ENCODE measurements at regions of chr3 and their contacts with region 1.

Region 1: DNA sequence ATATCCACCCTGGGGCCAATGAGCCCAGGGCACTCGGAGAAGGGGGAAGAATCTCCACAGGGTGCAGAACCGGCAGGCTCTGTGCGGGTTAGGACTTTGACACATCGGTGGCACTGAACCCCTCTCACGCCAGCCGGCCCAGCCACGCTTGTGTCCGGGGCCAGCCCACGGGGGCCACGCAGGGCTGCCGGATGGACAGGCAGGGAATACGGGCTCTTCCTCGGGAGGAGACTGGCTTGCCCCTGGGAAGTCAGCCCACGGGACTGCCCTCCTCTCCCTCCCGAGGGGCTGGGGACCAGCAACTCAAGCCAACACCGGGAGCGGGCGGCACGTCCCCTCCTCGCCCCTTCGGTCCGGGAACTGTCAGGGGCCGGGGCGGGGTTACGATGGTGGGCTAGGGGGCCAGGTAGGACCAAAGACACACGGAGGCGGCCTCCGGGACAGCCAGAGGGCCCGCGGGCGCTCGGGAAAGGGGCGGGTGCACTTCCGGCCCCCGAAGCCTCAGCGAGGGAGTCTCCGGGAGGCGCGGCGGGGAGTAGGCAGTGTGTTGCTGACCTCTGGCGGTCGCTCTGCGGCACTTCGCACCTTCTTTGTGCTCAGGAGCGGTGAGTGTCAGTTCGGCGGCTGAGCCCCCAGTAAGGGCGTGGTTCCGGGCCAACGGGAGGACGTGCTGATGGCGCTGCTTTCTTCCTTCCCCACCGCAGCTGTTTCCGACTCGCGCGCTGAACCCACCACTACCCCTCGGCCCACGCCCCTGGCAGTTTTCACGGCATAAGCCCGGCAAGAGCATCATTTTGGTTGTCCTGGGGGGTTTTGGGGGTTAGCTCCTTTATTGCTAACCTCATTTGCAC is 5.1 kb upstream of the CYP8B1 start:
- DNase-seq: peak; percentile 42
- ATAC-seq: peak; percentile 100
- H3K4me3 ChIP-seq: peak overlapping the region; percentile 64
- H3K27ac ChIP-seq: no peak overlapping the region
- H3K4me1 ChIP-seq: peaks cover 4% of the 10 kb centered on the region; the same call in 1 of the 2 replicates
- H3K27me3 ChIP-seq: no peaks in the 10 kb centered on the region
- CTCF ChIP-seq: peak; percentile 79 to 98 (median 95)
- EP300 ChIP-seq: no peak
- POLR2A ChIP-seq: peak; percentile 60
- RAD21 ChIP-seq: peak; percentile 80

Region 2: GRCh38 chr3:42831321-42831713 is 49.5 kb before region 1 on chr3:
- CTCF ChIA-PET with region 1: interaction called, 35 read pairs
- POLR2A ChIA-PET with region 1: no interaction called
- RAD21 ChIA-PET with region 1: interaction called, 9 read pairs
- SMC1A ChIA-PET with region 1: interaction called, 7 read pairs
- in situ Hi-C with region 1: loop called (anchors 5 kb)
- intact Hi-C with region 1: loop called (anchors 1 kb)
- DNase-seq: no peak
- ATAC-seq: peak; percentile 98
- H3K4me3 ChIP-seq: no peak overlapping the region
- H3K27ac ChIP-seq: no peak overlapping the region
- H3K4me1 ChIP-seq: no peaks in the 10 kb centered on the region
- H3K27me3 ChIP-seq: no peaks in the 10 kb centered on the region
- CTCF ChIP-seq: peak; percentile 71 to 80 (median 79)
- EP300 ChIP-seq: no peak
- POLR2A ChIP-seq: no peak
- RAD21 ChIP-seq: peak; percentile 68

Region 3: DNA sequence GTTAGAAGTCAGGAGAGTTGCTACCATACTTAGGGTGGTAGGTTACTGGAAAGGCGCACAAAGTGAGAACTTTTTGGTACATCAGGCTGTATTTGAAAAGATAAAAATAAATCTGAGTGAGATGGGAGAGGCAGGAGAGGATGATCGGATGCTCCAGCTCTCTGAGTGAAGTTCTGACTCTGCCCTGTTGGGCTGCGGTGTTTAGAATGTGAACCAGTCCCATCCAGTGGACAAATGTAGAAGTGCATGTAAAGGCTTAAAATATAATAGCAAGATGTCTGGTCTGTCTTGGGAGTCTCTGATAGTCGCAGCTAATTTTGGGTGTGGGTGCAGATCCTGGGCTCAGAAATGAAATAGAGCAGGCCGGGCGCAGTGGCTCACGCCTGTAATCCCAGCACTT is 41.2 kb before region 1 on chr3:
- CTCF ChIA-PET with region 1: interaction called, 24 read pairs
- POLR2A ChIA-PET with region 1: interaction called, 3 read pairs
- RAD21 ChIA-PET with region 1: interaction called, 6 read pairs
- SMC1A ChIA-PET with region 1: interaction called, 9 read pairs
- in situ Hi-C with region 1: loop called (anchors 5 kb)
- intact Hi-C with region 1: loop called (anchors 2 kb)
- DNase-seq: peak; percentile 45
- ATAC-seq: peak; percentile 100
- H3K4me3 ChIP-seq: no peak overlapping the region; the same call in 1 of the 2 replicates
- H3K27ac ChIP-seq: no peak overlapping the region
- H3K4me1 ChIP-seq: no peaks in the 10 kb centered on the region
- H3K27me3 ChIP-seq: no peaks in the 10 kb centered on the region
- CTCF ChIP-seq: peak; percentile 69 to 80 (median 79)
- EP300 ChIP-seq: no peak
- POLR2A ChIP-seq: no peak
- RAD21 ChIP-seq: peak; percentile 71